ENCODE measurements at regions of chr9 and their contacts with region 1.

Region 1: GRCh38 chr9:13088720-13089427 is 190.6 kb downstream of the MPDZ start:
- DNase-seq: peak; percentile 9
- ATAC-seq: no peak
- H3K4me3 Mint-ChIP-seq: no peak overlapping the region
- H3K27ac Mint-ChIP-seq: no peak overlapping the region
- H3K4me1 Mint-ChIP-seq: no peaks in the 10 kb centered on the region
- H3K27me3 Mint-ChIP-seq: no peaks in the 10 kb centered on the region

Region 2: GRCh38 chr9:12723409-12724028 is 365.4 kb before region 1 on chr9:
- CTCF ChIA-PET with region 1: no interaction called
- POLR2A ChIA-PET with region 1: no interaction called
- intact Hi-C with region 1: loop called (anchors 5 to 10 kb)
- DNase-seq: no peak
- ATAC-seq: no peak
- H3K4me3 Mint-ChIP-seq: no peak overlapping the region
- H3K27ac Mint-ChIP-seq: no peak overlapping the region
- H3K4me1 Mint-ChIP-seq: no peaks in the 10 kb centered on the region
- H3K27me3 Mint-ChIP-seq: no peaks in the 10 kb centered on the region

Region 3: GRCh38 chr9:12961276-12961809 is 127.5 kb before region 1 on chr9:
- CTCF ChIA-PET with region 1: no interaction called
- POLR2A ChIA-PET with region 1: no interaction called
- intact Hi-C with region 1: no loop called
- DNase-seq: no peak
- ATAC-seq: no peak
- H3K4me3 Mint-ChIP-seq: no peak overlapping the region
- H3K27ac Mint-ChIP-seq: no peak overlapping the region
- H3K4me1 Mint-ChIP-seq: no peaks in the 10 kb centered on the region
- H3K27me3 Mint-ChIP-seq: no peaks in the 10 kb centered on the region